ENCODE measurements at regions of chr13 and their contacts with region 1.

Region 1: GRCh38 chr13:101514788-101515187 is 62.3 kb downstream of the ITGBL1 start:
- DNase-seq: peak; percentile 75
- ATAC-seq: peak; percentile 38
- H3K4me3 ChIP-seq: no peak overlapping the region
- H3K27ac ChIP-seq: no peak overlapping the region
- H3K4me1 ChIP-seq: peaks cover 60% of the 10 kb centered on the region
- H3K27me3 ChIP-seq: no peaks in the 10 kb centered on the region
- CTCF ChIP-seq: peak; percentile 77

Region 2: GRCh38 chr13:101144808-101145419 is 369.9 kb before region 1 on chr13:
- CTCF ChIA-PET with region 1: interaction called, 3 read pairs
- POLR2A ChIA-PET with region 1: no interaction called
- intact Hi-C with region 1: loop called (anchors 2 kb)
- DNase-seq: peak; percentile 74
- ATAC-seq: peak; percentile 68
- H3K4me3 ChIP-seq: no peak overlapping the region
- H3K27ac ChIP-seq: no peak overlapping the region
- H3K4me1 ChIP-seq: peaks cover 22% of the 10 kb centered on the region
- H3K27me3 ChIP-seq: no peaks in the 10 kb centered on the region
- CTCF ChIP-seq: peak; percentile 70

Region 3: DNA sequence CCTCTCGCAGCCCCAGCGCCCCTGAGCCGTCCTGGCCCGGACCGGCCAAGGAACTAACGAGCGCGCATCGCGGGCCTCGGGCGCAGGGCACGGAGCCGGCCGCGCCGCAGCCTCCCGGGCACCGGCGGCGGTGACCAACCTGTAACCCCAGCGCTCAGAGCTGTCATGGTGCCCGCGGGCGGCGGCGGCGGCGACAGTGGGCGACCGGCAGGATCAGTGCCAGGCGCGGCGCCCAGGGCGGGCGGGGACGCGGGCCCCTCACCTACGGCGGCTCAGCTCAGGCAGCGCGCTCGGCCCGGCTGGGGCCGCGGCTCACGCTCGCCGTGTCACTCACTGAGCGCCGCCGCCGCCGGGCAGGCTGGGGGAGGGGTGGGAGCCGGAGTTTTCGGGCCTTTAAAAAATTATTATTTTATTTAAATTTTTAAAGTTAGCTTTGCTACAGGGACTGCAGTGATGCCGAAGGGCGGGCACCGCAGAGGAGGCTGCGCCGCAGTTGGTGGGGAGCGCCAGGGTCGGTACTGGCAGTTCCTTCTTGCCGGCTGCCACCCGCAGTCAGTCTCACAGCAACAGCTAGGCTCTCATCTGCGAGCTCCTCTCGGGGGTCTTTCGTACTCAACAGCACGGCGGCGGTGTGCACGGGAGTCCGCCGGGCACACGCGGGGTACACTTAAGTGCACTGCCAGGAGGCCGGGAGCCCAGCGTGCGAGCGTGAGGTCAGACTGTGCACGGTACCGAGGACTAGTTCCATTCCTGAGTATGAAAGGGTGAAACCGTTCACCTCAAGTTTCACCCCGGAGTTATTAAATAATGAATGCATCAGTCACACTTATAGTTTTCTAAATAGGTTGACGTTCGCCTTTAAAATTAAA is 98.4 kb before region 1 on chr13 and contains the start of gene NALCN:
- CTCF ChIA-PET with region 1: no interaction called
- POLR2A ChIA-PET with region 1: no interaction called
- intact Hi-C with region 1: loop called (anchors 5 kb)
- DNase-seq: peak; percentile 39
- ATAC-seq: peak; percentile 75
- H3K4me3 ChIP-seq: peak within 1 kb of the TSS; percentile 91
- H3K27ac ChIP-seq: peak within 1 kb of the TSS; percentile 90
- H3K4me1 ChIP-seq: peaks cover 22% of the 10 kb centered on the region
- H3K27me3 ChIP-seq: no peaks in the 10 kb centered on the region
- CTCF ChIP-seq: no peak
- total RNA-seq, gene NALCN: 6.4 and 11.8 TPM in 2 replicates

Region 4: DNA sequence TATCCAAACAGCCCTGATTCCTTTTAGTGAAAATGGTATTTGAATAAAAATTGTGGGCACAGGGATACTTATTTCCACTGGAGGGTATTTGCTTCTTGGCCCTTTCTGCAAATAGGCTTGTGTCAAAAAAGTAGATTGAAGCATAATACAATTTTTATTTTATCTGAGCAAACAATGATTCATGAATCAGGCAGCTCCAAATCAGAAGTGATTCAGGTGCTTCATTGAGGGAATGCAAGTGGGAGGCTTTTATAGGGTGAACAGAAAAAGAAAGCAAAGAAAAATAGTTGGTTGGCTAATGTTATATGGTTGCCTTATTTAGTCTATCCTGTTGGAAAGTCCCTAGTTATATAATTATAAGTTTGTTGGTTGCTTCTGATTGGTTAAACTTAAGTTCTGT is 55.6 kb after region 1 on chr13:
- CTCF ChIA-PET with region 1: no interaction called
- POLR2A ChIA-PET with region 1: no interaction called
- intact Hi-C with region 1: loop called (anchors 5 kb)
- DNase-seq: peak; percentile 86
- ATAC-seq: peak; percentile 92
- H3K4me3 ChIP-seq: peak overlapping the region; percentile 10; the same call in 1 of the 2 replicates
- H3K27ac ChIP-seq: peak overlapping the region; percentile 85
- H3K4me1 ChIP-seq: peaks cover 40% of the 10 kb centered on the region
- H3K27me3 ChIP-seq: no peaks in the 10 kb centered on the region
- CTCF ChIP-seq: no peak

Region 5: GRCh38 chr13:101626925-101627555 is 112.3 kb after region 1 on chr13:
- CTCF ChIA-PET with region 1: no interaction called
- POLR2A ChIA-PET with region 1: no interaction called
- intact Hi-C with region 1: loop called (anchors 2 kb)
- DNase-seq: peak; percentile 7
- ATAC-seq: peak; percentile 25
- H3K4me3 ChIP-seq: peak overlapping the region; percentile 64
- H3K27ac ChIP-seq: peak overlapping the region; percentile 76
- H3K4me1 ChIP-seq: peaks cover 52% of the 10 kb centered on the region
- H3K27me3 ChIP-seq: no peaks in the 10 kb centered on the region
- CTCF ChIP-seq: no peak

Region 6: DNA sequence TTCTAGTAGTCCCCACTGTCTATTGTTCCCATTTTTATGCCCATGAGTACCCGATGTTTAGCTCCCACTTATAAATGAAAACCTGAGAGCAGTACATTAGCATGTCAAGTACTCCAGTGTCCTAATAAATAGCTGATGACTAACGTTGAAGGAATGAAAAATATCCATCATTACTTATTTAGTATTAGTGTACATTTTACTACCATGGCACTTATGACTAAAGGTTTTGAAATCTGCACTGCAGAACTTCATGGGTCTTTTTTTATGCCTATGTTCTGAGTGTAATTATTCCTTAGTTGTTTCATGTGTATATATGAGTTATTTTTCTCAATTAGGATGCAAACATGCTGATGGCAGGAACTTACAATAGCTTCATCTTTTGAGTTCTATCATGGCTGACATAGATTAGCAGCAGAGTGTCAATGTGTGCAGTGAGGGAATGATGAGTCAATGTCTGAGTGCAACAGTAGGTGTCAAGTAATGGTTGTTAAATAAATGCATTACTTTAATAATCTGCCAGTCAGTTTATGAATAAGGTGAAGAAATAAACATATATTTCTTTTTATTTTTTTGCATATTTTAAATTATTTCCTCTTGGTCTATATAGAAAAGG is 126.1 kb after region 1 on chr13:
- CTCF ChIA-PET with region 1: no interaction called
- POLR2A ChIA-PET with region 1: no interaction called
- intact Hi-C with region 1: loop called (anchors 5 kb)
- DNase-seq: peak; percentile 95
- ATAC-seq: peak; percentile 82
- H3K4me3 ChIP-seq: peak overlapping the region; percentile 23
- H3K27ac ChIP-seq: peak overlapping the region; percentile 44
- H3K4me1 ChIP-seq: peaks cover 40% of the 10 kb centered on the region
- H3K27me3 ChIP-seq: no peaks in the 10 kb centered on the region
- CTCF ChIP-seq: no peak

Region 7: DNA sequence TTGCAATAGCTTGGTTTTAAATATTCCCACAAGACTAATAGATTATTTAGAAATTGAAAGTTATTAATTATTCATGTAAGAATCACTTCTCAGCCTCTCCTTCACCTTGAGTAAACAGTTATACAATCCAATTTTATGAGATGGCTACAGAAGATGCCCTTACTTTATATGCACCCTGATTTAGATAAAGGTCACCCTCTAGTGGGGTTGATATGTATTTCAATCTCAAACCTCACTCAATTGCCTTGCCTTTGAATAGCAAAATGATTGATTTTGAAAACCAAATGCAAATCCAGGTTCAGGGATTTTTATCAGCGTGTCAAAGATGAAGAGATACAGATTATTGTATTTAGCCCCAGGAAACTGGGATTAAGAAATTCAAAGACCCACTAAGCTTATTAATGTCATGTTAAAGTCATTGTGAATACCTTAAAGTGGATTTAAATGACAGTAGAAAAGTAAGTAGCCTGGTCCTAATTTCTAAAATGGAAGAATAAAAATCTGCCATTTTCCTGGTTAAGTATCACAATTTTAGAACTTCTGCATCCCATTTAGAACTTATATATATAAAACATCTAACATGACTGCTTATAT is 242.8 kb after region 1 on chr13:
- CTCF ChIA-PET with region 1: no interaction called
- POLR2A ChIA-PET with region 1: no interaction called
- intact Hi-C with region 1: loop called (anchors 1 kb)
- DNase-seq: peak; percentile 70
- ATAC-seq: peak; percentile 84
- H3K4me3 ChIP-seq: no peak overlapping the region
- H3K27ac ChIP-seq: no peak overlapping the region
- H3K4me1 ChIP-seq: peaks cover 10% of the 10 kb centered on the region
- H3K27me3 ChIP-seq: no peaks in the 10 kb centered on the region
- CTCF ChIP-seq: peak; percentile 68

Measured in PC-3 (cell line).